ENCODE measurements at regions of chr22 and their contacts with region 1.

Region 1: DNA sequence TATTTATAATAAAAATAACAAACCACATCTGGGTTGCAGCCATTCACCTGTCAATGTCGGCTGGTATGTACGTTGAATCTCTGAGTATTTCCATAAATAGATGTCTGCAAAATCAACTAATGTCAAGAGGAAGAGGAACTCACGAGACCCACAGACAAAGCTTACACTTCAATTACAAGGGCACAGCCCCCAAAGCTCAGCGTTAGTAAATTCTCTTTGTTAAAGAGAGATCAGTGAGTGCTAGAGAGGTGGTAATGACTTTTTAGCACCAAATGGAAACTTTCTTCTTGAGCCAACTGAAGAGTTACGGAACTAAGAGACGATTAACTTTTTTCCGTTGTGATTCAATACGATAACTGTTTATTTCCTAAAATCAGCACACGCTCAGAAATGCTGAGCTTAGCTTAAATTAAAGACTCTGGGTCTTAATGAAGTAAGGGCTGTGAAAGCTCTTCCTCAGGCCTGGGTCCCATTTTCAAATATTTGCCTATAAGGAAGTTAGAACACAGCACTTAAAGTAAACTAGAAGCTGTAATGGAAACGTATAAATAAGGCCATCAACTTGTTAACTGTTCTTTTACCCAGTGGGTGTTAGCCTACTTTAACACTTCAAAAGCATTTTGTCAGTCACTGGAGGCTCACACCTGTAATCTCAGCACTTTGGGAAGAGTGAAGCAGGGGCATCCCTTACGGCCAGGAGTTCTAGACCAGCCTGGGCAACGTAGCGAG is 22.8 kb upstream of the TFIP11 start:
- DNase-seq: no peak
- H3K4me3 ChIP-seq: no peak overlapping the region
- H3K4me3 Mint-ChIP-seq: no peak overlapping the region
- H3K27ac ChIP-seq: peak overlapping the region in 1 of 2 donors; percentile 67
- H3K27ac Mint-ChIP-seq: peak overlapping the region in 6 of 7 donors; percentile 13 to 79 (median 68)
- H3K4me1 ChIP-seq: peaks cover 10 to 11% of the 10 kb centered on the region in 2 donors
- H3K4me1 Mint-ChIP-seq: peaks cover 21% of the 10 kb centered on the region
- H3K27me3 ChIP-seq: no peaks in the 10 kb centered on the region
- H3K27me3 Mint-ChIP-seq: peaks cover 0 to 2% (median 2%) of the 10 kb centered on the region in 3 donors
- CTCF ChIP-seq: no peak

Region 2: DNA sequence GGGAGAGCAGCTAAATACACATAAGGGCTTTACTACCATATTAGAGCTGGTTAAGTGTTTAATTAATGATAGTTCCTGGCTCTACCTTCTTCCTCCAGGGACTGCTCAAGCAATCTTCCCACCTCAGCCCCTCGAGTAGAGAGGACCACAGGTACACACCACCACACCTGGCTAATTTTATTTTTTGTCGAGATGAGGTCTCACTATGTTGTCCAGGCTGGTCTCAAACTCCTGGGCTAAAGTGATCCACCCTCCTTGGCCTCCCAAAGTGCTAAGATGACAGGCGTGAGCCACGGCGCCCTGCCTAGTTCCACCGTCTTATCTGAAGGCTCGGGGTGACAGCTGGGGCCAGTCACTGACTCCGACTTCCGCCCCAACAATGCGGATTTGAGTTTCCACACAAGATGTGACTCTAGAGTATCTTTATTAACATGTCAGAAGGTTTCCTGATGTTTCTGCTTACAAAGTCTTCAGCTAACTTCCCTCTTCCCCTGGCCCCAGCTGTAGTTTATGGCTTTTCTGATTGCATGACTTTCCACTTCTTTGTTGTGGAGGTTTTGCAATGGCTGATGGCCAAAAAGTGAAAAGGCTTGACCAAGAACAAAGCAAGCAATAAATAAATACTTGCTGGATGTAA is 38.1 kb after region 1 on chr22:
- intact Hi-C with region 1: loop called in 1 of 2 experiments (anchors 5 kb)
- DNase-seq: peak; percentile 85 to 93 (median 89)
- H3K4me3 ChIP-seq: peak overlapping the region in 1 of 3 experiments; percentile 49
- H3K4me3 Mint-ChIP-seq: peak overlapping the region; percentile 54 to 76
- H3K27ac ChIP-seq: peak overlapping the region; percentile 78 to 89
- H3K27ac Mint-ChIP-seq: peak overlapping the region; percentile 94 to 98 (median 96)
- H3K4me1 ChIP-seq: peaks cover 63 to 72% of the 10 kb centered on the region in 2 donors
- H3K4me1 Mint-ChIP-seq: peaks cover 86% of the 10 kb centered on the region
- H3K27me3 ChIP-seq: no peaks in the 10 kb centered on the region
- H3K27me3 Mint-ChIP-seq: peaks cover 0 to 5% (median 2%) of the 10 kb centered on the region in 3 donors
- CTCF ChIP-seq: no peak

Region 3: DNA sequence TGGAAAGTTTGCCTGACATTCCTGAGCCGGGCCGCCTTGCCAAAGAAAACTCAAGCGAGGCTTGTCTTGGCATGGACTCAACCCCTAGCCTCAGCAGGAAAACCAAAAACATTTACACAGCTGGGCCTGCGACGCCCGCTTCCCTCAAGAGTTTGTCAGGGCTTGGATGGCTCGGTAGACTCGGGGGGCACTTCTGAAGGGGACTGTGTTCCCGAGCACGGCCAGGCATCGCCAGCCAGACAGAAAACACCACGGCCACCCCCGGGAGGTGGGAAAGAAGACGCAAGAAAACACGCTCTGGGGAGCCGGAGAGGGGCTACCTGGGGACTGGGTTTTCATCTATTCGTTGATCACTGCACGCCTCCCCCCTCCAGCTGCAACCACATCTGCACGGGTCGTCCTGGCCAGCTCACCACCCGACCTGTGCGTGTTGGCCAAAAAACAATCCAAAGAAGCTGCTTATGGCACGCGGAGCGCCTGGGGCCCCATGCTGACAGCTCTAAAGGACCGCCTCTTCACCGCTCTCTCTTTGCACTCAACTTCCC is 885.9 kb after region 1 on chr22:
- intact Hi-C with region 1: no loop called
- DNase-seq: no peak
- H3K4me3 ChIP-seq: no peak overlapping the region
- H3K4me3 Mint-ChIP-seq: peak overlapping the region in 1 of 2 donors; percentile 67
- H3K27ac ChIP-seq: no peak overlapping the region
- H3K27ac Mint-ChIP-seq: peak overlapping the region in 1 of 7 donors; percentile 79
- H3K4me1 ChIP-seq: no peaks in the 10 kb centered on the region
- H3K4me1 Mint-ChIP-seq: peaks cover 7% of the 10 kb centered on the region
- H3K27me3 ChIP-seq: peaks cover 2 to 19% of the 10 kb centered on the region in 2 donors
- H3K27me3 Mint-ChIP-seq: peaks cover 20 to 44% (median 22%) of the 10 kb centered on the region in 3 donors
- CTCF ChIP-seq: no peak